ENCODE measurements at regions of chr4 and their contacts with region 1.

Region 1: GRCh38 chr4:54233277-54233696 is 4.2 kb downstream of the PDGFRA start:
- DNase-seq: peak; percentile 80 to 89 (median 88)
- H3K4me3 ChIP-seq: peak overlapping the region; percentile 30 to 79 (median 68)
- H3K27ac ChIP-seq: no peak overlapping the region
- H3K4me1 ChIP-seq: peaks cover 0 to 50% (median 31%) of the 10 kb centered on the region in 4 experiments
- H3K27me3 ChIP-seq: peaks cover 0 to 50% (median 33%) of the 10 kb centered on the region in 5 experiments

Region 2: DNA sequence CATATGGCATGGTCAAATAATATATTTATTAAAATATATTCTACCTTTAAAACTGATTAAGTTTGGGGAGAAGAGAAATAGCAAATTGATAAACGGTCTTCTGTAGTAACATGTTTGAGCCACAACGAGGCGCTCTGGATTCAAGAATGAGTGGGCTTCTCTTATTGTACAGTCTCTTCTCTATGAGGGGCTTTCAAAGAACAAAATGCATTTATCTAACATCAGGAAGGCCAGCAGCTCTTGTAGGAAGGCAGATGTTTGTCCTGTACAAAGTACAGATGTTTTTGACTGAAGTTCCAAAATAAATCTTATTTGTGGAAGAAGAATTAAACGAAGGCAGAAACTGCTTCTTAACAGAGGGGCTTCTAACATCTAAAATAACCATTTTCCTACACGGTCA is 1217.6 kb before region 1 on chr4:
- CTCF ChIA-PET with region 1: interaction called, 63 read pairs
- POLR2A ChIA-PET with region 1: no interaction called
- DNase-seq: peak; percentile 74 to 81 (median 76)
- H3K4me3 ChIP-seq: no peak overlapping the region
- H3K27ac ChIP-seq: no peak overlapping the region
- H3K4me1 ChIP-seq: peaks cover 13 to 50% (median 35%) of the 10 kb centered on the region in 4 experiments
- H3K27me3 ChIP-seq: no peaks in the 10 kb centered on the region

Region 3: DNA sequence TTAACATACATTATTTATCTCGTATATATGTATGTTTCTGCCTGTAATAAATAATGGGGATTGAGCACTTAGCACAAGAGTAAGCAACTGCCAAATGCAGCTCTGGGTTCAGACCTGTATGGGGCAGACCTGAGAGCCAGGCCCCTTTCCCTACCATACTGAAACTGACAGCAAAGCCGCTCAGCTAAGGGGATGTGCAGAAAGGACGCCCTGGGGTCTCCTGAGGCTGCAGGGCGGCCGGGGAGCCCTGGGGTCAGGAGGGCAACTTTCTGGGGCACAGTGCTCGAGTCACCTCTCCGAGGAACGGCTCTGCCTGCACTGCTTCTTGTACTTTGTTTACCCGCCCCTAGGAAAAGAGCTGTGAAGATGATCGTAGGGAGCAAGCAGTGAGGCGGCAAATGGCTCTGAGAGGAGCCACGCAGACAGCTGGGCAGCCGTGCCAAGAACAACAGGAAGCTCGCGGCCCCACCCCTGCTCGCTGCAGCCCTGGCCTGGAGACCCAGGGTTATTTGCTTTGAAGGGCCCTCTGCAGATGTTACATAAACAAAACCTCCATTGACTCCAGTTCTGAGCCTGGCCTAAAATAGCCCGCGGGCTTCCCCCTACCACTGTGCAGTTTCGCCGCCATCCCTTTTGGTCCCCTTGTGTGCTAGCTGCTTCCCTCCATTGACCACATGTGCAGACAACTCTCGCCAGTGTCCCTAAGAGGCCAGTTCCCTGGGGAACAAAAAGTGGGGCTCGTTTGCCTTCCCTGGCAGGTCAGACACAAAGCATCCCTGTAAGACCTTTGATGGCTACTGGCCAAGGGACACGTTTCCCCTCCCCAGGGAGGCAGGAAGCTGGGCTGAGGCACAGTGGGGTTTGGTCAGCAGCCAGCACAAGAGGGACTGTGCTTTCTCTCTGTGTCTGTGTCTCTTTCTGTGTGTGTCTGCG is 530.7 kb before region 1 on chr4:
- CTCF ChIA-PET with region 1: interaction called, 19 read pairs
- POLR2A ChIA-PET with region 1: no interaction called
- DNase-seq: peak; percentile 23 to 78 (median 64)
- H3K4me3 ChIP-seq: peak overlapping the region in 6 of 7 experiments; percentile 3 to 70 (median 44)
- H3K27ac ChIP-seq: peak overlapping the region in 1 of 2 experiments; percentile 7
- H3K4me1 ChIP-seq: peaks cover 2 to 20% (median 15%) of the 10 kb centered on the region in 4 experiments
- H3K27me3 ChIP-seq: no peaks in the 10 kb centered on the region

Region 4: DNA sequence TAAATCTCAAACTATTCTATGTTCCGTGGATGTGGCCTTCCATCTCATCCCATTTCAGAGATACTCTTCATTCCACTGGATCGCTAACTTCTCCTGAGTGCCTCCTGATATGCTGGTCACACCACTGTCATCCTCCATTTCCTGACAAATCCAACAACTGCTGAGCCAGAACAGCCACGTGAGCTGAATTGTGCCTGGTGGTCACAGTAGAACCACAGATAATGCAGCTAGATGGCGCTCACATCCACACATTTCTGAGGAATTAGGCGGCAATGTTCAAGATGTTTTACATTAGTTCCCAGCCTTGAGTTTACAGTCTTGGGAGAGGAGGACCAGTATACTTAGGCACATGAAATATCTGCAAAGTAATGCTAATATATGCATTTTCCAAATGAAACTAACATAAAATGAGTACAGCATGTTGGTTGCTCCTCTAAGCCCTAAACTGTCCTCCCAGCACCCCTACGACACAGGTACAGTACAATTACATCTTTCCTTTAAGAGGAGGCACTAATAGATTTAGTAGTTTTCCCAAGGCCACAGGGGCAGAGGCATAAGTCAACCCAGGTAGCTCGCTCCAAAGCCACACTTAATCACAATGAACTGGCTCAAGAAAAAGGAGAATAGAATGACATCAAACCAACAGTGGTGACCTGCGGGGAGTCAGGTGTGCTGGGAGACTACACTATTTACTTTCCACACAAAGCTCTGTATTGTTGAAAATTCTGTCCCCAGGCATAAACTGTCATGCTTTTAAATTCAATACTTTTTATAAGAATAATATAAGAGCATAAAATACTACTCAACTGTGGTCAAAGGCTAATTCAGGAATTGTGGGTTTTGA is 303.1 kb before region 1 on chr4:
- CTCF ChIA-PET with region 1: interaction called, 61 read pairs
- POLR2A ChIA-PET with region 1: no interaction called
- DNase-seq: peak; percentile 78 to 85 (median 79)
- H3K4me3 ChIP-seq: no peak overlapping the region
- H3K27ac ChIP-seq: no peak overlapping the region
- H3K4me1 ChIP-seq: peaks cover 0 to 3% (median 0%) of the 10 kb centered on the region in 4 experiments
- H3K27me3 ChIP-seq: peaks cover 0 to 2% (median 0%) of the 10 kb centered on the region in 5 experiments

Region 5: DNA sequence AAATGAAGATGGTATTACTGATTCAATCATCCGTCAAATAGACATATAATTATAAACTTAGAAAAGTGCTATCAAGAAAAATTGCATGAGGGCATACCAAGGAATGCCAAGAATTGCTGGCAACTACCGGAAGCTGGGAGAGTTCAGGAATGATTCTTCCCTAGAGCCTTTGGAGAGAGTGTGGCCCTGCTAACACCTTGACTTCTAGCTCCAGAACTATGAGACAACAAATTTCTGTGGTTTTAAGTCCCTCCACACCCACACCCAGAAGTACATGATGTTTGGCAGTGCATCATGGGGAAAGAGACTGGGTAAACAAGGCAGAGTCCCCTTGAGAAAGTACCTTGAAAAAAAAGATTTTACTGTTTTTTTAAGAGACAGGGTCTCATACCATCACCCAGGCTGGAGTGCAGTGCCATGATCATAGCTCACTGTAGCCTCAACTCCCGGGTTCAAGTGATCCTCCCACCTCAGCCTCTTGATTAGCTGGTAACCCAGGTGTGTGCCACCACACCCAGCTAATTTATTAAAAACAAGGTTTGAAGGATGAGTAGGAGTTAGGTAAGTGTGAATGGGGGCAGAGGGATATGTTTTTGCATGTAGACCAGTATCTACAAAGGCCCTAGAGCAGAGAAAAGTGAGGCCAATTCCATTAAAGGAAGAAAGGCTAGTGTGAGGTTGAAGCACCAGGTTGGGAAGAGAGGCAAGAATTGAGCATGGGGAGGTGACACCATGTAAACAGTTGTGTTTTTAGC is 80.3 kb before region 1 on chr4:
- CTCF ChIA-PET with region 1: no interaction called
- POLR2A ChIA-PET with region 1: no interaction called
- DNase-seq: no peak
- H3K4me3 ChIP-seq: no peak overlapping the region
- H3K27ac ChIP-seq: no peak overlapping the region
- H3K4me1 ChIP-seq: no peaks in the 10 kb centered on the region
- H3K27me3 ChIP-seq: no peaks in the 10 kb centered on the region

Region 6: DNA sequence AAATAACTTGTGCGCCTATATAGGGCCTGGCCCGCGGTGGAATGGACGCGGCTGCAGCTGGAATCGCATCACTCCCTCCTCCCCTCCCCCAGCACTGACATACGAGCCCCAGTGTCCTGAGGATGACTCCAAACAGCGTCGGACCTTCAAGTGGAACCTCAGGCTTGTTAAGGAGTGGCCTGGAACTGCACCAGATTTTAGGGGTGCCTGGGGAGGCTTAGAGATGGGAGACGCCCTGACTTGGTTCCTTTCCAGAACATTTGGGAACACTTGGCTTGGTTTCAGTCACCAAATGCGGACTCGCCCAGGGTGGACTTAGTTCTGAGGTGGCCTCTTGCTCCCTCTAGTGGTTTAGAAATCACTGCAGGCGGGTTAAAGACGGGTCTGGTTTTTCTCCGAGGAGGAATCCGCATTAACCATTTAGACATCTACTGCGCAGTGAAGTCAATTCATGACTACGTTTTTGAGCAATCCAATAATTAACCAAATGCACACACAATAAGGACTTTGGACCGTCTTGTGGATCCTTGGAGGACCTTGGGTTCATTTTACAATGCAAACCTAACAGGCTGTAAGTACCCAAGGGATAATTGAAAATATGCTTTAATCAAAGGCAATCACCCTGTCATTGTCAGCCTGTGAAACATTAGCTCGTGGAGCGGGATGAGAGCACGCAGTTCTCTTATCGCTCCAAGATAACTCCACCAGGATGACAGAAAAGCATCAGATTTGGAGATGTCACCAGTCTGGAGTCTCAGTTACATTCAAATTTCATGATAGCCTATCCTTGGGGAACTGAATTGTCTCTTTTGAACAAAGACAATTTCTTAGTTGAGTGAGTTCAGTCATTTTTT is 15.4 kb before region 1 on chr4:
- CTCF ChIA-PET with region 1: interaction called, 29 read pairs
- POLR2A ChIA-PET with region 1: no interaction called
- DNase-seq: peak; percentile 75 to 85 (median 78)
- H3K4me3 ChIP-seq: peak overlapping the region; percentile 31 to 74 (median 55)
- H3K27ac ChIP-seq: no peak overlapping the region
- H3K4me1 ChIP-seq: peaks cover 0 to 7% (median 6%) of the 10 kb centered on the region in 4 experiments
- H3K27me3 ChIP-seq: peaks cover 6 to 23% (median 8%) of the 10 kb centered on the region in 5 experiments

Measured in common myeloid progenitor, CD34-positive (primary cell).